Activated CD4-positive, alpha-beta T cell treated with anti-CD3 and anti-CD28 coated beads for 36 hours (primary cell): ENCODE measurements at regions of chr16 and their contacts with region 1.

Region 1: DNA sequence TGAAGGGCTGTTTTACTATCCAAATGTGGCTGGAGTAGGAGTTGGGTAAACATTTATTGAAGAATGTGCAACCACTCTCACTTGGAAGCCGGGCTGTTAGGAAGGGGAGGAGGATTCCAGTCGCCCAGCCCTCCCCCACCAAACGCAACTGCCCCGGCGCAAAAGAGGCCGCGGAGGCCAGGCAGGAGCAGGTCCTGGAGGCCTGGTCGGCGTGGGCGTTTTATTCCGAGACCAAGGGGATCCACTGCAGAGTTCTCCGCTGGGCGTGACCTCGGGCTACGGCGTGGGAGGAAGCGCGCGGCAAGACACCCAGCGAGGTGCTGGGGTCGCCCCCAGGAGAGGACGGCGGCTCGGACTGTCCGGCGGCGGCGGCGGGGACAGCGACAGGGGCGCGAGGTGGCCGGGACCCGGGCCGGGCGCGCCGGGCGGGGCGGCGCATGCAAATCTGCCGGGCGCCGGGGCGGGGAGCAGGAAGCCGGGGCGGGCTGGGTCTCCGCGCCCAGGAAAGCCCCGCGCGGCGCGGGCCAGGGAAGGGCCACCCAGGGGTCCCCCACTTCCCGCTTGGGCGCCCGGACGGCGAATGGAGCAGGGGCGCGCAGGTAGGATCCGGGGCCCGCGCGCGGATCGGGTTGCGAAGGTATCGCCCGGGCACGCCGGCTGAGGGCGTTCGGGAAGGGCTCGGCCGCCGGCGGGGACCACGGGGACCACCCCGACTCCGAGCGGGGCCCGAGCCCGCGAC is at the start of gene IL4R:
- DNase-seq: peak; percentile 87
- ATAC-seq: no peak
- H3K4me3 Mint-ChIP-seq: peak within 1 kb of the TSS; percentile 90
- H3K27ac Mint-ChIP-seq: peak within 1 kb of the TSS; percentile 97
- H3K4me1 Mint-ChIP-seq: peaks cover 44% of the 10 kb centered on the region
- H3K27me3 Mint-ChIP-seq: no peaks in the 10 kb centered on the region
- total RNA-seq, gene IL4R: 185 to 229 TPM

Region 2: GRCh38 chr16:26605626-26606271 is 707.8 kb before region 1 on chr16:
- CTCF ChIA-PET with region 1: no interaction called
- POLR2A ChIA-PET with region 1: no interaction called
- intact Hi-C with region 1: no loop called
- DNase-seq: no peak
- ATAC-seq: peak; percentile 16
- H3K4me3 Mint-ChIP-seq: no peak overlapping the region
- H3K27ac Mint-ChIP-seq: no peak overlapping the region
- H3K4me1 Mint-ChIP-seq: peaks cover 27% of the 10 kb centered on the region
- H3K27me3 Mint-ChIP-seq: peaks cover 28% of the 10 kb centered on the region

Region 3: DNA sequence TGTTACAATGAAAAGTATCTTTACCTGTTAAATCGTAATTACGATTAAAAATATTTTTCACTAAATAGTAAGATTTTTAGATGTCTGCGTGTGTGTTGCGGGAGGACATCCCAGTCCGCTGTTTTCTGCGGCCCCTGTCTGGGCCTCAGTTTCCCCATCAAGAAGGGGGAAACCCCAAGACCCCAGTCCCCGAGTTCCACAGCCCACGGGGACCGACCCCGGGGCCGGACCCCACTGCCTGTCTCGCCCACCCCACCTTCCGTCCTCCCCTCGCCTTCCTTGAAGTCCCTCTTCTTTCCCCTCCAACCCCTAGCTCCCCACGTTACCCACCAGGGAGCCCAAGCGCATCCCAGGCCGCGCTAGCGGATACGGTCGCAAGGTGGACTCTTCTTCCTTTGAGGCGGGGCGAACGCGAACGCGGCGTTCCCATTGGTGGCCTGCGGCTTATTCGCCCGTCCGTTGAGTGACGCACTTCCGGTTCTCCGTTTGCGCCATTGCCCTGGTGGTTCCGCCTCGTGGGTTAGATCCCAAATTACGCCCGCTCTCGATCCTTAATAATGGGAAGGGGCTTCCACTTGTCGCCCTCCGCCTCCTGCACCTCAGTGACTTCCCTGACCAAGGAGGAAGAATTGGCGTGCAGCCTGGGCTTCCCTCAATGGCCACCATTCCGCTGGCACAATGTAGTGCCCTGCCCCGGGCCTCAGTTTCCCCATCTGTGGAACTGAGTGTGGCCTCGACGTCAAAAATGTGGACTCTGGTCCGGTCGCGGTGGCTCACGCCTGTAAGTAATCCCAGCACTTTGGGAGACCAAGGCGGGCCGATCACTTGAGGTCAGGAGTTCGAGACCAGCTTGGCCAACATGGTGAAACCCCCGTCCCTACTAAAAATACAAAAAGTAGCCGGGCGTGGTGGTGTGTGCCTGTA is 45.0 kb before region 1 on chr16 and contains the start of gene NSMCE1:
- CTCF ChIA-PET with region 1: interaction called, 5 read pairs
- POLR2A ChIA-PET with region 1: interaction called, 10 read pairs
- intact Hi-C with region 1: loop called in 1 of 2 experiments (anchors 1 kb)
- DNase-seq: peak; percentile 99
- ATAC-seq: peak; percentile 94
- H3K4me3 Mint-ChIP-seq: peak within 1 kb of the TSS; percentile 90
- H3K27ac Mint-ChIP-seq: peak within 1 kb of the TSS; percentile 95
- H3K4me1 Mint-ChIP-seq: peaks cover 72% of the 10 kb centered on the region
- H3K27me3 Mint-ChIP-seq: no peaks in the 10 kb centered on the region
- total RNA-seq, gene NSMCE1: 110 to 127 TPM

Region 4: DNA sequence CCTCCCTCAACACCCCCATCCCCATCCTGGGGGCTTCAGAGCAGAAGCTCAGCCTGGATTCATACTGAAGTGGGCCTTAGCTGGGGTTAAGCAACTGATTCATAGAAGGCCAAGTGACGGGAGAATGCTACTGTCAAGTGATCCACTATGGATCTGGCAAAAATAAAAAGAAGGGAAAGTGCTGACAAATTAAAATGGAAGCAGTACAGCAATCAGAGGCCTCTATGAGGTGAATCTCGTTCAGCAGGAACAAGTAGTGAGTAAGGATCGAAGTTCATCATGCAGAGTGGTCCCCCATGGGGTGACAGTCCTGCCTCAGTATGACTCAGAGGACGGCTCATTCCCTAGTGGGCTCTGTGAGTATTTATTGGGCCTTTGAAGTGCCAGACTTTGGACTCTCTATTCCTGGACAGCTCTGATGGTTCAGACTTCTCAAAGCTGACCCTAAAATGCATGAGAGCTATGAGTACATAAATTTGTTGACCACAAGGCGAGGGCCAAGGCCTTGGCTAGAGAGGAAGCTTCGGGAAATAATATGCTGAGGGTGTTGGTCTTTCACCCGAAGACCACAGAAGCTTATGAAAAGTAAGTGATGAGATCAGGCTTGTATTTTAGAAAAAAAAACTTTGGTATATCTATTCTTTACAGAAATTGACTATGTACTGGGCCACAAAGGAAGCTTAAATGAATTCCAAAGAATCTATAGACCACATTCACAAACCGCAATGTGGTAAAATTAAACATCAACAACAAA is 39.7 kb before region 1 on chr16:
- CTCF ChIA-PET with region 1: interaction called, 5 read pairs
- POLR2A ChIA-PET with region 1: interaction called, 10 read pairs
- intact Hi-C with region 1: loop called in 1 of 2 experiments (anchors 1 kb)
- DNase-seq: peak; percentile 69
- ATAC-seq: peak; percentile 89
- H3K4me3 Mint-ChIP-seq: peak overlapping the region; percentile 35
- H3K27ac Mint-ChIP-seq: peak overlapping the region; percentile 87
- H3K4me1 Mint-ChIP-seq: peaks cover 70% of the 10 kb centered on the region
- H3K27me3 Mint-ChIP-seq: no peaks in the 10 kb centered on the region

Region 5: DNA sequence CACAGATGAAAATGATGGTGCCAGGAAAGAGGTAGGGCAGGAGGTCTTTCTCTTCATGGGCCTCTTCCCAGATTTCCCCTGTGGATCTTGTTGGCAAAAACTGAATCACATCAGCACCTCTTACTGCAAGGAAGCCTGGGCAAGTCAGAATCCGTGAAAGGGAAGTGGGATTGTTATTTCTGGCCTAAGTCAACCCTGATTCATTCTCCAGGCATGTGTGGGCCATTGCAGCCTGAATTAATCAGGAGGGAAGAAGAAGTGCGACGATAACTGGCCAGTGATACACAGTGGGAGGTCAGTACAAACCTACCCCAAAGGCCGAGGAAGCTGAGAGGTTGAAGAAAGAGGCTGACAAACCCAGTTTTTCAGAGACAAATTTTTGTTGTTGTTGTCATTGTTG is 27.1 kb before region 1 on chr16:
- CTCF ChIA-PET with region 1: interaction called, 3 read pairs
- POLR2A ChIA-PET with region 1: interaction called, 13 read pairs
- intact Hi-C with region 1: loop called in 1 of 2 experiments (anchors 1 kb)
- DNase-seq: no peak
- ATAC-seq: no peak
- H3K4me3 Mint-ChIP-seq: no peak overlapping the region
- H3K27ac Mint-ChIP-seq: no peak overlapping the region
- H3K4me1 Mint-ChIP-seq: peaks cover 82% of the 10 kb centered on the region
- H3K27me3 Mint-ChIP-seq: peaks cover 3% of the 10 kb centered on the region

Region 6: GRCh38 chr16:27374804-27375425 is 61.3 kb after region 1 on chr16:
- CTCF ChIA-PET with region 1: interaction called, 5 read pairs
- POLR2A ChIA-PET with region 1: interaction called, 13 read pairs
- intact Hi-C with region 1: no loop called
- DNase-seq: peak; percentile 81
- ATAC-seq: peak; percentile 48
- H3K4me3 Mint-ChIP-seq: no peak overlapping the region
- H3K27ac Mint-ChIP-seq: no peak overlapping the region
- H3K4me1 Mint-ChIP-seq: peaks cover 50% of the 10 kb centered on the region
- H3K27me3 Mint-ChIP-seq: no peaks in the 10 kb centered on the region

Region 7: DNA sequence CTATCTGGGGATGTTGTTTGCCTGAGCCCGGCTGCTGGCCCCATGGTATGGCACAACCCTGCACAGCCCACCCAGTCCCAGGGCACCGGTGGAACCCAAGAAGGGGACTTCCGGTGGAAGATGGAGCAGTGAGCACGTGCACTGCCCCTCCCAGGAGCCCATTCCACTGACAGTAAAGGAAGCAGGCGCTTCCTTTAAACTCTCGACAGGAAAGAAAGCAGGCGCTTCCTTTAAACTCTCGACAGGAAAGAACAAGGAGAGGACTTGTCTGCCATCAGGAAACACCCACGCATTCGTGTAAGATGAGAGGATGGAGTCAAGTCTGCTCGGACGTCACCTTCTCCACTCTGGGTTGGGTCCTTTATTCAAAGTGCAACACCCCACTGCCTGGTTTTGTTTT is 142.1 kb after region 1 on chr16:
- CTCF ChIA-PET with region 1: no interaction called
- POLR2A ChIA-PET with region 1: interaction called, 5 read pairs
- intact Hi-C with region 1: loop called (anchors 2 to 5 kb)
- DNase-seq: peak; percentile 58
- ATAC-seq: no peak
- H3K4me3 Mint-ChIP-seq: no peak overlapping the region
- H3K27ac Mint-ChIP-seq: peak overlapping the region; percentile 86
- H3K4me1 Mint-ChIP-seq: peaks cover 58% of the 10 kb centered on the region
- H3K27me3 Mint-ChIP-seq: no peaks in the 10 kb centered on the region